ENCODE measurements at regions of chr11 and their contacts with region 1.

Region 1: GRCh38 chr11:3807909-3808860 is at the start of gene PGAP2:
- DNase-seq: peak; percentile 77
- ATAC-seq: peak; percentile 78
- H3K4me3 Mint-ChIP-seq: peak within 1 kb of the TSS; percentile 93
- H3K27ac Mint-ChIP-seq: peak within 1 kb of the TSS; percentile 94
- H3K4me1 Mint-ChIP-seq: peaks cover 24% of the 10 kb centered on the region
- H3K27me3 Mint-ChIP-seq: no peaks in the 10 kb centered on the region
- total RNA-seq, gene PGAP2: 33.6 to 39.2 TPM

Region 2: DNA sequence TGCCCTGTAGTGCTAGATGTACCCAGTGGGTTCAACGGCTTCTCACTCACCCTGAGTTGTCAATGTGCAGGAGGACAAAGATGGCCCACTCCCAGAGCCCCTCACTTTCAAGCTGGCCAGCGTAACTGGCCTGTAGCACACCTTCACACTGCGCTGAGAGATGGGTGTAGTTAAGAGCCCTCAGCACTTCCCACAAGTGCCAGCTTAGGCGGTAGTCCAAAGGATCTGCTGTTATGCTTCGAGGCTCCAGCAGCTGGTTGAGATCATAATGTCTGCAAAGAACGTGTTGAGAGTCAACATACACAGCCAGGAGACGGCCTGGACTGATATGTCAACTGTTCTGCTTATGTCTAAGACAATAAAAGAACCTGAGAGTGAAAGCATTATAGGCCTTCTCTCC is 122.3 kb before region 1 on chr11:
- CTCF ChIA-PET with region 1: interaction called, 5 read pairs
- POLR2A ChIA-PET with region 1: no interaction called
- intact Hi-C with region 1: loop called in 1 of 2 experiments (anchors 5 kb)
- DNase-seq: no peak
- ATAC-seq: no peak
- H3K4me3 Mint-ChIP-seq: no peak overlapping the region
- H3K27ac Mint-ChIP-seq: no peak overlapping the region
- H3K4me1 Mint-ChIP-seq: peaks cover 5% of the 10 kb centered on the region
- H3K27me3 Mint-ChIP-seq: no peaks in the 10 kb centered on the region

Region 3: DNA sequence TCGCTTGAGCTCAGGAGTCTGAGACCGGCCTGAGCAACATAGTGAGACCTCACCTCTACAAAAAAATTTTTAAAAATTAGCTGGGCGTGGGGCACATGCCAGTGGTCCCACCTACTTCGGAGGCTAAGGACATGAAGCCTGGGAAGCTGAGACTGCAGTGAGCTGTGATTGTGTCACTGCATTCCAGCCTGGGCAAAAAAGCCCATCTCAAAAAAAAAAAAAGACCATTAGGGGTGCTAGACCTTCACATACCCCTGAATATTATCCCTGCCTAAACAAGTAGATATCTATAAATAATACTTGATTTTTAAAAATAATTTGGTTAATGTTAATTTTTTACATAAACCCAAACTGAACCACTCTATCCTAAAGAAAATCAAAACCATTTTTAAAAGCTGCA is 35.0 kb before region 1 on chr11:
- CTCF ChIA-PET with region 1: interaction called, 11 read pairs
- POLR2A ChIA-PET with region 1: no interaction called
- intact Hi-C with region 1: no loop called
- DNase-seq: no peak
- ATAC-seq: no peak
- H3K4me3 Mint-ChIP-seq: no peak overlapping the region
- H3K27ac Mint-ChIP-seq: no peak overlapping the region
- H3K4me1 Mint-ChIP-seq: no peaks in the 10 kb centered on the region
- H3K27me3 Mint-ChIP-seq: no peaks in the 10 kb centered on the region

Region 4: GRCh38 chr11:3786781-3787428 is 21.3 kb before region 1 on chr11:
- CTCF ChIA-PET with region 1: interaction called, 17 read pairs
- POLR2A ChIA-PET with region 1: interaction called, 14 read pairs
- intact Hi-C with region 1: loop called (anchors 1 to 2 kb)
- DNase-seq: no peak
- ATAC-seq: no peak
- H3K4me3 Mint-ChIP-seq: no peak overlapping the region
- H3K27ac Mint-ChIP-seq: peak overlapping the region; percentile 22
- H3K4me1 Mint-ChIP-seq: peaks cover 76% of the 10 kb centered on the region
- H3K27me3 Mint-ChIP-seq: no peaks in the 10 kb centered on the region

Region 5: DNA sequence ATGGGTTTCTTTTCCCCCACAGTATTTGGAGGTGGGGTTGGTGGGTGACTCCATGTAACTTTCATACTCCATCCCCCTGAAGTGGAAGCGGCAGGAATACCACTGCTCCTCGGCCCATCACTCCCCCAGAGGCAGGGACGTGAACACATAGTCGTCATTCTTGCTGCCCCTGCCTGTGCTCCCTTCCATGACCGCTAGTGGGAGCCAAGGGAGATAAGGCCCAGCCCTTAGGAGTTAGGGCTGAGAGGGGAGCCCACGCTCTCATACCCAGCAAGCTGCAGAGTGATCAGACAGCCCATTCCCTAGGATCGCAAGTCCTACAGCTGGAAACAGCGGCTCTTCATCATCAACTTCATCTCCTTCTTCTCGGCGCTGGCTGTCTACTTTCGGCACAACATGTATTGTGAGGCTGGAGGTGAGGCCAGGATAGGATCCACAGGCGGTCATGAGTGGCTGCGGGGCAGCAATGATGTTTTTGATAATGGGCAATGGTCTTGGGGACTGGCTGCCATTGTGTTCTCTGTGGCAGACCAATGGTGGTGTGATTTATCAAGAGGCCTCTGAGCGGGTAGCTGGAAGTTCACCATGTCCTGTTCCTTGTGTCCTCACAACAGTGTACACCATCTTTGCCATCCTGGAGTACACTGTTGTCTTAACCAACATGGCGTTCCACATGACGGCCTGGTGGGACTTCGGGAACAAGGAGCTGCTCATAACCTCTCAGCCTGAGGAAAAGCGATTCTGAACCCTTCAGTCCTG is 16.7 kb after region 1 on chr11:
- CTCF ChIA-PET with region 1: interaction called, 12 read pairs
- POLR2A ChIA-PET with region 1: no interaction called
- intact Hi-C with region 1: no loop called
- DNase-seq: peak; percentile 89
- ATAC-seq: peak; percentile 93
- H3K4me3 Mint-ChIP-seq: no peak overlapping the region
- H3K27ac Mint-ChIP-seq: peak overlapping the region; percentile 68
- H3K4me1 Mint-ChIP-seq: peaks cover 27% of the 10 kb centered on the region
- H3K27me3 Mint-ChIP-seq: no peaks in the 10 kb centered on the region

Region 6: DNA sequence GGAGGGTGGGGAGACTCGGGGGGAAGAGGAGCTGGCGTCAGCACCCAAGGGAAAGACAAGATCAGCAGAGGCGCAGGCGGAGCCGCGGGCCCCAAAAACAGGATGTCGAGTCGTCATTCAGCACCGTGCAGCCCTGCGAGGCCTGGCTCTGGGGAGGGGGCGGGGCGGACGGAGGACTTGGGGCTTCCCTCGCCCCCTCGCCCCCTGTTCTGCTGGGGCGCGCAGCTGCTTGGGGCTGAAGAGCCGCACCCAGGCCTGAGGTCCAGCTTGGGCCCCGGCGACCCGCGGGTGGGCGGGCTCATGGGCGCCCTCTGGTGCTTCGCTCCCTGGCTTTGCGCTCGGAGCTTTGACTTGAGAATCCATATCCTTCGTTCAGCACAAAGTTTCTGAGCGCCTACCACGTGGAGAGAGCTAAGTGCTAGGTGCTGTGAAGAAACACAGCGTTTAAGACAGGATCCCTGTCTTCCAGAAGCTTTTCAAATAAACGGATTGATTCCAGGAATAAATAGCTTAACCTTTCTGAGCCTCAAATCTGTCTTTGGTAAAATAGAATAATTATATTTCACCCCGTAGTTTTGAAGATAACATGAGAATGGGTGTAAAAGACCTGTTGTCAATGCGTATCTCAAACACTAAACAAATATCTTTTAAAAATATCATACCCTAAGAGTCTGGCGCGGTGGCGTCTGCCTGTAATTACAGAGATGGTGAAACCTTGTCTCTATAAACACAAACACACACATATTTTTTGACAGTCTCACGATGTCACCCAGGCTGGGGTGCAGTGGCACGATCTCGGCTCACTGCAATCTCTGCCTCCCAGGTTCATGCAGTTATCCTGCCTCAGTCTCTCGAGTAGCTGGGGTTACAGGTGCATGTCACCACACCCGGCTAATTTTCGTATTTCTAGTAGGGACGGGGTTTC is 33.5 kb after region 1 on chr11:
- CTCF ChIA-PET with region 1: interaction called, 11 read pairs
- POLR2A ChIA-PET with region 1: interaction called, 3 read pairs
- intact Hi-C with region 1: loop called in 1 of 2 experiments (anchors 1 kb)
- DNase-seq: peak; percentile 97
- ATAC-seq: peak; percentile 30
- H3K4me3 Mint-ChIP-seq: peak overlapping the region; percentile 93
- H3K27ac Mint-ChIP-seq: peak overlapping the region; percentile 93
- H3K4me1 Mint-ChIP-seq: peaks cover 54% of the 10 kb centered on the region
- H3K27me3 Mint-ChIP-seq: no peaks in the 10 kb centered on the region